ENCODE measurements at regions of chr1 and their contacts with region 1.

Region 1: DNA sequence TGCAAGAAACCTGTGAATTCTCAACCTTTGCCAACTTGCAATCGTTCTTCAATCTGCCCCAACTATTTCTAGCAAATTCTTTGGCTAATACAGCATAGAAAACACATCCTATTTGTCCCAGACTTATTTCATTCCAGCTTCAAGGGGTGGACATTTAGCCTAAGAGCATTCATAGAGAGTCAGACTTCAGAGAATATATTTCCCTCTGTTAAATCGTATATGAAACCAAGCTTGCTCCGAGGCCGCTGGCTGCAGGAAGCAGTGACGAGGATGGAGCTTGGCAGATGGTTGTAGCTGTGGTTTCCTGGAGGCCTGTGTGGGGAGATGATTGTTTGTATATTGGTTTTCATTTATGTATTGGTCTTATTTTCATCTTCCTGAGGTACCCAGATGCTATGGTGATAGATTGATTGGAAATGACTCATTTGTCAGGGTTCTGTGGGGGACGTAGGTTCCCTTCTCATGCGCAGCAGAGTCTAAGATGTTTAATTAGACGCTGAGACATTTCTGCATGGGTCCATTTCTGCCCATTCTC is 26.1 kb downstream of the MAN1C1 start:
- DNase-seq: peak; percentile 63
- ATAC-seq: peak; percentile 92
- H3K4me3 Mint-ChIP-seq: peak overlapping the region; percentile 80
- H3K27ac Mint-ChIP-seq: peak overlapping the region; percentile 77
- H3K4me1 Mint-ChIP-seq: peaks cover 45% of the 10 kb centered on the region
- H3K27me3 Mint-ChIP-seq: peaks cover 12% of the 10 kb centered on the region

Region 2: DNA sequence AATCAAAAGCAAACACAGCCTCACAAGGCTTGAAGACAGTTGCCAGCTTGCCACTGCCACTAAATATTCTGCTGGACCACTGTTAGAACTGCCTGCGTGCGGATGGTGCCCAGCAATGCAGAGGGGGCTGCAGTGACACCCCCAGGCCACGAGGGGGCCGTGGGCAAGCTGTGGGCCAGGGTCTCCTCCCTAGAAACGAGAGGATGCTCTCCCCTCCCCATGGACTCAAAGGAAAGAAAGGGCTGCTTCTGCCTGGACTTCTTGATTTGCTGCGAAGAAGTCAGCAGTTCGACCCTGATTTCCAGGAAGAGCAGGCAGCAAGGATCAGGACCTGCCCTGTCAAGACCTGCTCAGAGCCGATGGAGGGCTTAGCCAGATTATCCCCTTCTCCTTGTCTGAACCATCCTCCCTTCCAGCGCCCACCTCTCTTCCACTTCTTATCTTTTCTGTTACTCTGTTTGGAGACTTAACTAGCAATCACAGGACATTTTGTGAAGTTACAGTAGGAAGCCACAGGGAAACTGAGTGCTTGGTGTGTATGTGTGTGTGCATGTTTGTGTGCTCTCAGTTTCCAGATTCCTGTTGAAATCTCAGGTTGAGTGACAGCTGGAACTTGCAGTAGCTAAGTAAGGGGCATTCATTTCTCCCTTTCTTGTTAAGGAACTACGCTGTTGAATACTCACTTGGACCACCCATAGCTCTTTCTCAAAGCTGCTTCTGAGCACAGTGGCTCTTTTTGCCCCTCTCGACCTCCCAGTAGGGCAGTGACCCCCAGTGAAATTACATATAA is 23.3 kb before region 1 on chr1:
- POLR2A ChIA-PET with region 1: interaction called, 22 read pairs
- DNase-seq: peak; percentile 68
- ATAC-seq: no peak
- H3K4me3 Mint-ChIP-seq: peak overlapping the region; percentile 94
- H3K27ac Mint-ChIP-seq: peak overlapping the region; percentile 95
- H3K4me1 Mint-ChIP-seq: peaks cover 76% of the 10 kb centered on the region
- H3K27me3 Mint-ChIP-seq: no peaks in the 10 kb centered on the region

Region 3: GRCh38 chr1:25631750-25632485 is 10.7 kb before region 1 on chr1:
- POLR2A ChIA-PET with region 1: interaction called, 26 read pairs
- DNase-seq: no peak
- ATAC-seq: peak; percentile 69
- H3K4me3 Mint-ChIP-seq: peak overlapping the region; percentile 83
- H3K27ac Mint-ChIP-seq: peak overlapping the region; percentile 97
- H3K4me1 Mint-ChIP-seq: peaks cover 48% of the 10 kb centered on the region
- H3K27me3 Mint-ChIP-seq: no peaks in the 10 kb centered on the region

Region 4: DNA sequence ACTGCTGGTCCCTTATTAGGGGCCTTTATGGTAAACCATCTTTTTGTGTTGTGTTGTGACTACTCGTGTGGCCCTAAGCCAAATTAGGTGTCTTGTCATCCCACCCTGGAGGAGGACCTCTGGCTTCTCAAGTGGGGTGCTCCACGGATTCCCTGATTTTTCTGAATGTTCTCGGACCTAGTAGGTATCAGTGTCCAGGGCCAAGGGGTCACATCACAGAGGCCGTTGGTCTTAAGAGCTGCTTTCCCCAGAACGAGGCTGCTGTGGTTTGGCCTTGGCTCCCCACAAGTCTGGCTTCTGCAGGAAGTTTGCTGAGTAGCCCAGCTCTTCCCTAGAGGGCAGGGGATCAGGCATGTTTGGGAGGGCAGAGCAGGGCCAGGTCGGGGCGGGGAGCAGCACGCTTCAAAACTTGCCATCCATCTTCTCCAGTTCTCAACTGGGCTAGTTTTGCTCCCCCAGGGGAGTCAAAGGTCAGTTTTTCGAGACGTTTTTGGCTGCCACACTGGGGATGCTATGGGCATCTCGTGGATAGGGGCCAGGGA is 10.8 kb after region 1 on chr1:
- POLR2A ChIA-PET with region 1: no interaction called
- DNase-seq: no peak
- ATAC-seq: no peak
- H3K4me3 Mint-ChIP-seq: no peak overlapping the region
- H3K27ac Mint-ChIP-seq: no peak overlapping the region
- H3K4me1 Mint-ChIP-seq: peaks cover 22% of the 10 kb centered on the region
- H3K27me3 Mint-ChIP-seq: no peaks in the 10 kb centered on the region

Measured in activated naive CD8-positive, alpha-beta T cell treated with anti-CD3 and anti-CD28 coated beads, Interleukin-2, amount 10 ng/mL, durations not matched to agents 7 days and 5 days (primary cell).